ENCODE measurements at regions of chr1 and their contacts with region 1.

Region 1: DNA sequence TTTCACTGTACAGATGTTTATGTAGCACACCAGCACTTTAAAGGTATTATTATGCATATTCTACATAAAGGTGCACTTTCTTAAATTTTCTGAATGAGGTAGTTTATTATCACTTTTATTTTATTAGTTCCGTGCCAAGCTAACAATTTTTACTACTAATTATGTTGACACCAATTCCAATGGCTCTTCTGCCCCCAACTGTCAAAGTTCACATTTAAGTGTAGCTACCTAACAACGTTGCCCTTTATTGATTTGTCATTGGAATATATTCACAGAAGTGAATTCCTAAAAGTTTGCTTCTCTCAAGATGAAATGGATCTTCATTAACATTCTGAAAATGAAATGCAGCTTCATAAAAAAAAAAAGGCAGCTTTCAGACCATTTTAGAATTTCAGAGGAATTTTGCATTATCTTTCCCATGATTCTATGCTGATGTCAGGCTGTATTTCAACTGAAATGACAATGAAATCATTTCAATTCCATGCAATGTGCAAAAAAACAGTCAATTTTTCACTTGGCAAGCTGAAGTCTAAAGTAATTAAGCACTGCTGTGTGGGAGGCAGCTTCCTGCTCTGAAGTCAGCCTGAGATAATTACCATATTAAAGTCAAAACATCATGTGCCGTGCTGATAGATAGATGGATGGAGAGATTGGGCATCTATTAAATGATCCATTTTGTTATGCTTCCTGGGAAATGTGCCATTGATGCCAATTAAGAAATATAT is 229.2 kb downstream of the TTLL7 start:
- DNase-seq: peak; percentile 35
- H3K4me3 ChIP-seq: peak overlapping the region; percentile 56
- H3K27ac ChIP-seq: no peak overlapping the region
- H3K4me1 ChIP-seq: peaks cover 52% of the 10 kb centered on the region
- CTCF ChIP-seq: peak; percentile 71

Region 2: DNA sequence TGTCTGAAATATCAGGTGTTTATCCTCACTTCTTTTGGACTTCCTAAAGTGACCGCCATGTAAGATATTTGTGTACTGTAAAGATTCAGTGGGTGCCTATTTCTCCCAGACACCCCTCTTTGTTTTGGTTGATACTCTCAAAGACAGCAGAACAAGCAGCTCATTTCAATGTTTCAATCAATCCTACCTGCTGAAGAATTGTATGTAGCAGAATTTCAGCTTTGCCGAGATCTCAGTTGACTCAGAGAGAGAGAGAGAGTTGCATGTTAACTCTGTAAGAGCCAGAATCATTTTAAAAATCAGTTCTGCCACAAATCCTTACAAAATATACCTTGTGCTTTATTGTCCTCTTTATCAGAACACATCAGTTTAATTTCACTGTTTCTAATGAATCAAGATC is 981.7 kb before region 1 on chr1:
- CTCF ChIA-PET with region 1: no interaction called
- POLR2A ChIA-PET with region 1: interaction called, 10 read pairs
- intact Hi-C with region 1: no loop called
- DNase-seq: no peak
- H3K4me3 ChIP-seq: no peak overlapping the region
- H3K27ac ChIP-seq: no peak overlapping the region
- H3K4me1 ChIP-seq: no peaks in the 10 kb centered on the region
- CTCF ChIP-seq: no peak

Region 3: DNA sequence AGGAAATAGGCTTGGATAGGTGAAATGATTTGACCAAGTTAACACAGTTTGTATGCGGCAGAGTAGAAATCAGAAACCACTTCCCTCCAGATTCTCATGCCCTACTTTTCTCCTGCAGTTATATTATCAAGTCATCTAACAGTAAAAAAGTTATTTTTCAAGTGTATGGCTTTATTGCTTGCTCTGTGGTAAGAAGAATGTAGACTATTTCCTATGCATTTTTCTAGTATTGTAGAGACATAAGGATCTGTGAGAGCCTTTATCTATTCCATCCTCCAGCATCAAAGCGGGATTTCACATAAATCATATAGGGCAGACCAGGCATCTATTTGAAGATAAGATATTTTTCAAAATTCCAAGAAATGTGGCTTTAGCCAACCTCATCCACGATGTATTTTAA is 20.7 kb after region 1 on chr1:
- CTCF ChIA-PET with region 1: no interaction called
- POLR2A ChIA-PET with region 1: no interaction called
- intact Hi-C with region 1: no loop called
- DNase-seq: no peak
- H3K4me3 ChIP-seq: no peak overlapping the region
- H3K27ac ChIP-seq: no peak overlapping the region
- H3K4me1 ChIP-seq: no peaks in the 10 kb centered on the region
- CTCF ChIP-seq: no peak

Region 4: GRCh38 chr1:83839566-83840173 is 69.9 kb after region 1 on chr1:
- CTCF ChIA-PET with region 1: no interaction called
- POLR2A ChIA-PET with region 1: no interaction called
- intact Hi-C with region 1: no loop called
- DNase-seq: no peak
- H3K4me3 ChIP-seq: no peak overlapping the region
- H3K27ac ChIP-seq: no peak overlapping the region
- H3K4me1 ChIP-seq: no peaks in the 10 kb centered on the region
- CTCF ChIP-seq: no peak